Kidney (tissue), 22 donors: ENCODE measurements at regions of chr5 and their contacts with region 1.

Region 1: DNA sequence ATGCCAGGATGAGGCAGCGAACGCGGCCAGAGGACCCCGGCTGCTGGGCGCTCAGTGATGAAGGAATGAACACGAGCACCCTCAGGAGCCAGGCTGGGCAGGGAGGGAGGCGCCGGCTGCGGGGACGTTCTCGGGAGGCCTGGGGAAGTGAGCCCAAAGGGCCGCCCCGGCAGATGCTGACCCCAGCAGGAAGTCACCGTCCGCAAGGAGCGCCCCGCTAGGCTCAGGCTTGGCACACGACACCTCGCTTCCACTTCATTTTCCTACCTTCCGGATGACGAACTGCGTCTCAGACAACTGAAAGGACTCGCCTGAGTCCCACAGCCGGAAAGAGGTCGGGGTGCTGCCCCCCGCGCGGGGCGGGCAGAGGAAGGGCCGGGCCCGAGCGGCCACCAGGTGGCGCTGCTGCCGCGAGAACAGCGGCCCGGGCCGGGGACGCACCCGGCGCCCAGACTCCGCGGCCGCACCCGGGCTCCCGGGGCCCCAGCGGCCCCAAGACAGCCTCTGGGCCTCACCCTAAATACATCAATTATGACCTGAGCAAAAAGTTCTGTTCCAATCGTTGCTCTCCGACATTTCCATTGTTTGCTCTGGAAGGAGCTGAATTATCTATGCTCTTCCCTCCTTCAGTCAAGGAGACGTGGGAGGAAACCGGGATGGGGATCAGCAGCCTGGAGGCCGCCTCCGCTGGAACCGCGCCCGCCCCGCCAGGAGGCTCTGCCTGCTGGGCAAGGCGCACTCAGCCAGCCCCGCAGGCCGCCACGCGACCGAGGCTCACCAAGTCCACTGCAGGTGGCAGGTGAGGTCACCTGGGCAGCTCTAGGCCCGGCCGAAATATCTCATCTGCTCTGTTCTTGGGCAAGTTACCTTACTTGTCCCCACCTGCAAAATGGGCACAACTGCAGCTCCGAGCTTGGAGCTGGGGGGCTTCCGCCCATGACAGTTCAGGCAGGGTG is 107.0 kb downstream of the ZNF354C start:
- DNase-seq: peak; percentile 66 to 80 (median 71)
- H3K4me3 ChIP-seq: peak overlapping the region in 2 of 3 donors; percentile 16 to 37
- H3K27ac ChIP-seq: no peak overlapping the region
- H3K4me1 ChIP-seq: peaks cover 0 to 5% (median 0%) of the 10 kb centered on the region in 3 donors
- H3K27me3 ChIP-seq: no peaks in the 10 kb centered on the region
- CTCF ChIP-seq: peak; percentile 70

Region 2: GRCh38 chr5:179494774-179495526 is 327.8 kb after region 1 on chr5:
- intact Hi-C with region 1: loop called (anchors 5 kb)
- DNase-seq: no peak
- H3K4me3 ChIP-seq: peak overlapping the region in 1 of 3 donors; percentile 34
- H3K27ac ChIP-seq: no peak overlapping the region
- H3K4me1 ChIP-seq: no peaks in the 10 kb centered on the region
- H3K27me3 ChIP-seq: no peaks in the 10 kb centered on the region
- CTCF ChIP-seq: no peak